ENCODE measurements at regions of chr17 and their contacts with region 1.

Region 1: GRCh38 chr17:75779231-75779986 is 5.2 kb upstream of the UNK start:
- DNase-seq: peak; percentile 100
- ATAC-seq: peak; percentile 81
- H3K4me3 ChIP-seq: peak overlapping the region; percentile 73 to 92 (median 86)
- H3K27ac ChIP-seq: peak overlapping the region; percentile 91
- H3K4me1 ChIP-seq: peaks cover 58% of the 10 kb centered on the region
- H3K27me3 ChIP-seq: no peaks in the 10 kb centered on the region; a peak in 1 of 5 replicates
- CTCF ChIP-seq: no peak
- EP300 ChIP-seq: peak in 1 of 2 experiments; percentile 12; a peak in 1 of 4 replicates
- POLR2A ChIP-seq: peak; percentile 100
- RAD21 ChIP-seq: peak; percentile 80

Region 2: GRCh38 chr17:75639771-75640316 is 139.6 kb before region 1 on chr17:
- CTCF ChIA-PET with region 1: no interaction called
- POLR2A ChIA-PET with region 1: no interaction called
- in situ Hi-C with region 1: no loop called
- intact Hi-C with region 1: no loop called
- DNase-seq: no peak
- ATAC-seq: no peak; the same call in 2 of the 3 replicates
- H3K4me3 ChIP-seq: no peak overlapping the region
- H3K27ac ChIP-seq: no peak overlapping the region
- H3K4me1 ChIP-seq: no peaks in the 10 kb centered on the region
- H3K27me3 ChIP-seq: no peaks in the 10 kb centered on the region
- CTCF ChIP-seq: no peak
- EP300 ChIP-seq: no peak
- POLR2A ChIP-seq: no peak
- RAD21 ChIP-seq: no peak

Region 3: DNA sequence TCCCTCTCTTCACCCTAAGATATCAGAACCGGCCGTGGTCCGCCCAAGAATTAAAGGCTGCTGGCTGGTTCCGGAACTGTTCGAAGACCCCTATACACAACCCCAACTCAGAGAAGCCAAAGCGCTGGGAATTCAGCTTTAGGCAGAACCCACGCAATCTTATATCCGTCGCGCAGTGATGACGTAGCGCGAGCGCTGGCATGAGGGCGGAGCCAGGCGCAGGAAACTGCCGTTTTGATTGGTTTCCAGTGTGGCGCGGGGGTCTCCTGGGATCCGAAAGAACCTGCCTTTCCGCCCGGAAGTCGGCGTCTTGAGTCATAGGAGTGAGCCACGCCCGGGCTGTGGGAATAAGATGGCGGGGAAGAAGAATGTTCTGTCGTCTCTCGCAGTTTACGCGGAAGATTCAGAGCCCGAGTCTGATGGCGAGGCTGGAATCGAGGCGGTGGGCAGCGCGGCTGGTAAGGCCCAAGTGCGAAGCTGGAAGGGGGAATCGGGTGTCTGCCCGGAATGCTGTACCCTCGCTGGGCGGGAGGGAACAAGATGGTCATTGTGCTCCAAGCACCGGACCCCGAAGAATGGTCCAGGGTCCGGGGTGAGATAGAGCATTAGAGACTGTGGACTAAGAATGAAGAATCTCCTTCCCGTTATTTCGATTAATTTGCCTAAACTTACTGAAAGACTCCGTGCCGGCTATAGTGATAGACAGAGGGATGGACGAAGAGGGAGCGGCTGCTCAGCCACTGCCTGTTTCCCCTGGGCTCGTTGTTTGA is 112.2 kb before region 1 on chr17 and contains the starts of genes RECQL5 and SAP30BP:
- CTCF ChIA-PET with region 1: no interaction called
- POLR2A ChIA-PET with region 1: interaction called, 13 read pairs
- in situ Hi-C with region 1: no loop called
- intact Hi-C with region 1: no loop called
- DNase-seq: peak; percentile 98
- ATAC-seq: peak; percentile 100
- H3K4me3 ChIP-seq: peak within 1 kb of the TSS; percentile 77 to 99 (median 99)
- H3K27ac ChIP-seq: peak within 1 kb of the TSS; percentile 73
- H3K4me1 ChIP-seq: peaks cover 39% of the 10 kb centered on the region
- H3K27me3 ChIP-seq: peaks cover 0 to 5% of the 10 kb centered on the region in 2 experiments; a peak in 1 of 5 replicates
- CTCF ChIP-seq: 0 out of 2 replicates have a peak, but pooled peaks have one; percentile 15
- EP300 ChIP-seq: 0 out of 4 replicates have a peak, but pooled peaks of 1 of the 2 experiments have one; percentile 28
- POLR2A ChIP-seq: peak; percentile 82 to 91
- RAD21 ChIP-seq: 0 out of 2 replicates have a peak, but pooled peaks have one; percentile 10
- total RNA-seq, gene RECQL5: 17.8 and 32.0 TPM in 2 replicates
- total RNA-seq, gene SAP30BP: 99.4 and 109 TPM in 2 replicates

Region 4: GRCh38 chr17:75795820-75796607 is 16.6 kb after region 1 on chr17:
- CTCF ChIA-PET with region 1: no interaction called
- POLR2A ChIA-PET with region 1: interaction called, 52 read pairs
- in situ Hi-C with region 1: no loop called
- intact Hi-C with region 1: no loop called
- DNase-seq: no peak
- ATAC-seq: peak; percentile 54
- H3K4me3 ChIP-seq: no peak overlapping the region
- H3K27ac ChIP-seq: peak overlapping the region; percentile 47
- H3K4me1 ChIP-seq: peaks cover 18% of the 10 kb centered on the region
- H3K27me3 ChIP-seq: no peaks in the 10 kb centered on the region
- CTCF ChIP-seq: no peak
- EP300 ChIP-seq: no peak
- POLR2A ChIP-seq: no peak
- RAD21 ChIP-seq: no peak

Region 5: DNA sequence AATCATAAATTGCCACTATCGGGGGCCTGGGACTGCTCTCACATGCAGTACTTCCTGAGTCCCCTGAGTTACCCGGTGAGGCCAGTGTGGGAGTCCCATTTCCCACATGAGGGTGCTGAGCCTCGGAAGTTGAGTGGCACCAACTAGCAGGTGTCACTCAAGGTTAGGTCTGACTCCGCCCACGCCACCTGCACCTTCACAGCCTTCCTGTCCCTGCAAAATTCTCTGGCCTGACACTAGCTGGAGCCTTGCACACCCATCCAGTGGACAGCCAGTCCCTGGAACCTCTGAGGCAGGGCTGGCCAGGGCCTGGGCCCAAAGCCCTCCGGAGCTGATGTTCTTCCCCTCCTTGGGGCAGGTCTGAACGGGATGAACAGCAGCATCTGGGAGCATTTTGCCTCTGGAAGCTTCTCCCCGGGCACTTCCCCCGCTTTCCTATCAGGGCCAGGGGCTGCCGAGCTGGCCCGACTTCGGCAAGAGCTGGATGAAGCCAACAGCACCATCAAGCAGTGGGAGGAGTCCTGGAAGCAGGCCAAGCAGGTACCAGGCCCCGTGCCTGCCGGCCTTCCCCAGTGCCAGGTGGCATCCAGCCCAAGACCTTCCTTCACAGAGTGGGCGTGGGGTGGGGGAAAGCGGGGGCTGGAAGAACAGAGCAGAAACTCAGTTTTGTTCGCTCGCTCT is 42.9 kb after region 1 on chr17:
- CTCF ChIA-PET with region 1: no interaction called
- POLR2A ChIA-PET with region 1: interaction called, 29 read pairs
- in situ Hi-C with region 1: no loop called
- intact Hi-C with region 1: loop called (anchors 5 kb)
- DNase-seq: no peak
- ATAC-seq: no peak
- H3K4me3 ChIP-seq: no peak overlapping the region
- H3K27ac ChIP-seq: no peak overlapping the region
- H3K4me1 ChIP-seq: peaks cover 10% of the 10 kb centered on the region
- H3K27me3 ChIP-seq: no peaks in the 10 kb centered on the region
- CTCF ChIP-seq: no peak
- EP300 ChIP-seq: no peak
- POLR2A ChIP-seq: no peak
- RAD21 ChIP-seq: no peak

Region 6: GRCh38 chr17:75855310-75856081 is 76.1 kb after region 1 on chr17 and contains the start of gene WBP2:
- CTCF ChIA-PET with region 1: no interaction called
- POLR2A ChIA-PET with region 1: interaction called, 132 read pairs
- in situ Hi-C with region 1: no loop called
- intact Hi-C with region 1: no loop called
- DNase-seq: peak; percentile 100
- ATAC-seq: peak; percentile 92
- H3K4me3 ChIP-seq: peak within 1 kb of the TSS; percentile 81 to 90 (median 90)
- H3K27ac ChIP-seq: peak within 1 kb of the TSS; percentile 89
- H3K4me1 ChIP-seq: peaks cover 53% of the 10 kb centered on the region
- H3K27me3 ChIP-seq: no peaks in the 10 kb centered on the region; a peak in 1 of 5 replicates
- CTCF ChIP-seq: peak; percentile 80
- EP300 ChIP-seq: peak in 1 of 2 experiments; percentile 63; a peak in 2 of 4 replicates
- POLR2A ChIP-seq: peak; percentile 89 to 99
- RAD21 ChIP-seq: peak; percentile 90
- total RNA-seq, gene WBP2: 28.2 and 29.2 TPM in 2 replicates

Region 7: DNA sequence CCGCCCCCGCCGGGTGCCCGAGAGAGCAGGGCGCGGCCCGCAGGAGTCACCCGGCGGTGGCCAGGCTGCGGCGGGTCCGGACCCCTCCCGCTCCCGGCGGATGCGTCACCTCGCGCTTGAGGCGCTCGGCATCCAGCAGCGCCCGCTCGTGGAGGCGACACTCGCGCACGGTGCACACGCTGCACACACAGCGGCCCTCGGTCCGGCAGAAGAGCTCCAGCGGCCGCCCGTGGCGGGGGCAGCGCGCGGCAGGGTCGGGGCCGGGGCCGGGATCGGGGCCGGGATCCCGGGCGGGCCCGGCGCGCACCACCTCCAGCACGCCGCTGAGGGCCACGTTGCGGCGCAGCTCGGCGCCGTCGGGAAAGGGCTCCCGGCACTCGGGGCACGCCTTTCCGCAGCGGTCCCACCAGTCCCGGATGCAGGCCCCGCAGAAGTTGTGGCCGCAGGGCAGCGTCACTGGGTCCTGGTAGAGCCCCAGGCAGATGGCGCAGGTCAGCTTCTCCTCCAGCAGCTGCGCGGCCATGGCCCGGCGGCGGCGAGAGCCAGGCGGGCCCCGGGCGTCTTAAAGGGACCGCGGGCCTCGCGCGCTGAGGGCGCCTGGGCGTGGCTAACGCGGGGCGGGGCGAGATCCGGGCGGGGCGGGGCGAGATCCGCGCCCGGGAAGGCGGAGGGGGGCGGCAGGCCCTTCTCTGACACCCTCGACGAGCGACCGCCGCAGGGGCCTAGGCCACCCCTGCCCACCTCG is 117.2 kb after region 1 on chr17 and contains the start of gene TRIM65:
- CTCF ChIA-PET with region 1: no interaction called
- POLR2A ChIA-PET with region 1: interaction called, 39 read pairs
- in situ Hi-C with region 1: no loop called
- intact Hi-C with region 1: no loop called
- DNase-seq: peak; percentile 56
- ATAC-seq: peak; percentile 18
- H3K4me3 ChIP-seq: peak within 1 kb of the TSS; percentile 68 to 83 (median 75)
- H3K27ac ChIP-seq: peak within 1 kb of the TSS; percentile 79
- H3K4me1 ChIP-seq: peaks cover 46% of the 10 kb centered on the region
- H3K27me3 ChIP-seq: no peaks in the 10 kb centered on the region
- CTCF ChIP-seq: peak; percentile 64
- EP300 ChIP-seq: no peak
- POLR2A ChIP-seq: peak in 1 of 2 experiments; percentile 92; a peak in 2 of 4 replicates
- RAD21 ChIP-seq: peak; percentile 84
- total RNA-seq, gene TRIM65: 22.4 and 24.6 TPM in 2 replicates

Region 8: GRCh38 chr17:75987007-75987406 is 207.6 kb after region 1 on chr17:
- CTCF ChIA-PET with region 1: no interaction called
- POLR2A ChIA-PET with region 1: no interaction called
- in situ Hi-C with region 1: no loop called
- intact Hi-C with region 1: no loop called
- DNase-seq: no peak
- ATAC-seq: no peak
- H3K4me3 ChIP-seq: no peak overlapping the region
- H3K27ac ChIP-seq: no peak overlapping the region
- H3K4me1 ChIP-seq: peaks cover 41% of the 10 kb centered on the region
- H3K27me3 ChIP-seq: no peaks in the 10 kb centered on the region
- CTCF ChIP-seq: no peak
- EP300 ChIP-seq: no peak
- POLR2A ChIP-seq: no peak
- RAD21 ChIP-seq: no peak

Measured in HepG2 (cell line).